Activated T-helper 2 cell treated with anti-CD3 and anti-CD28 coated beads, Interferon-gamma antibody, Interleukin-2, Interleukin-4, amounts not matched to agents 10 μg/mL and 5 μg/mL and 100 μg/mL, durations not matched to agents 14 hours and 24 hours and 36 hours (primary cell): ENCODE measurements at regions of chr9 and their contacts with region 1.

Region 1: DNA sequence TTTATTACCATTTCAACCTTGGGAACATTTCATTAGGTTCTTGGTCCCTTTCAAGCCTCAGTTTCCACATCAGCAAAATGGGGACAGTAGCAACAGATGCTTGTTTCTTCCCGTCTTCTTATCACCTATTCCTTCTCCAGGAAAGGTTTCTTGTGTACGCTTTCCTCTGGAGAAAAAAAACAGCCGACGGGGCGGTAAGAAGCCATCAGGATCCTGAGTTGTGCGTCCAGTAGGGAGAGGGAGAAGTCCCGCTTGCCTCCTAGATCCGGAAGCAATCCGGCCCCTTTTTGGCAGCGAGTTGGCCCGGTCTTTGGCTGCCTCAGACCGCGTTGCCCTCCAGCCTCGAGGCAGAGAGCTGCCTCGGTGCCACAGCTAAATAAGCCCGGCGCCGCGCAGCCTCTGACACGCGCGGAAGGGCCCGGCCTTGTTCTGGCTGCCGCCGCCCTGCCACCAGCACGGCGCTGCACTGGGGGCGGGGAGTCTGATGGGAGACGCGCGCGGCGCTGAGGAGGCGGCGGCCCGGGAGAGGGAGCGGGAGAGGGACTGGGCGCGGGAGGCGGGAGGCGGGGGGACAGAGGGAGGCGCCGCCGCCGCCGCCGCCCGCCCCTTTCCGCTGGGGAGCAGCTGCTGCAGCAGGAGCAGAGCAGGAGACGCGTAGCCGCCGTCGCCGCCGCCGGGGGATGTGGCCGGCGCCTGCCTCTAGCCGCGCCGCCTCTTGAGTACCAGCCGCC is at the start of gene SLC44A1:
- DNase-seq: peak; percentile 89
- H3K4me3 Mint-ChIP-seq: peak within 1 kb of the TSS; percentile 83
- H3K27ac Mint-ChIP-seq: peak within 1 kb of the TSS; percentile 15
- H3K4me1 Mint-ChIP-seq: peaks cover 9% of the 10 kb centered on the region
- H3K27me3 Mint-ChIP-seq: peaks cover 66% of the 10 kb centered on the region
- total RNA-seq, gene SLC44A1: 2.0 and 3.4 TPM in 2 replicates

Region 2: DNA sequence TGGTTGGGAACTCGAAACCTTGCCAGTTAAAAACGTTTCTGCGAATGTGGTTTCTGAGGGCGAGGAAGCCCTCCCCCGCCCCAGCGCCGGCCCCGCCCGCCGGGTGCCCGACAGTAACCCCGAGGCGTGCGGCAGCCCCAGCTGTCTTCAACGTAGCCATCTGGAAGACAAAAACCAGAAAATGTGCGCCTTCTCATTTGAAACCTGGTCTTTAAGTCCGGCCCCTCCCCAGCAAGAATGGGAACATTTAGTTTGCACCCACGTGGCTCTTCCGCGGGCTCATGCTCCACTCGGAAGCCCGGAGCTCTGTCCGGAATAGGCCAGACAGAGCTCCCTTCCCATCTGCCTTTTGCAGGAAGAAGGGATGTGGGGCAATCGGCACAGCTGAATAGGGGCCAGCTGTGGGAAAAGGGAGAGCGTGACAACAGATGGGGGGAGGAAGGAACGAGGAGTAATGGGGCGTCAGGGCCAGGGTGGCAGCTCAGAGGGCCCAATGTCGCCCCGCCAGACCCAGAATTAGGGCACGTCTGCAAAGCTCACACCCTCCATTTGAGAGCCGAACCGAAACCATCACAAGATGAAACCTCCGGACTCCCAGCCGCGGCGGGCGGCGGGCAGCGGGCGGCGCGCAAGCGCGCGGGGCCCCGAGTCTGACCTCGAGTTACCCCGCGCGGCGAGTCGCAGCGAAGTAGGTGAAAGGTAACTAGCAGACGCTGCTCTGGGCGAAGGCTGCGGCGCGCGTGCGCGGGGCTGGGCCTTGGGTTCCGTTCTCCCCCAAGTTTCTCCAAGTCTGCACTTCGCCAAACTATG is 252.8 kb before region 1 on chr9:
- intact Hi-C with region 1: loop called (anchors 10 kb)
- DNase-seq: peak; percentile 74
- H3K4me3 Mint-ChIP-seq: peak overlapping the region; percentile 75
- H3K27ac Mint-ChIP-seq: peak overlapping the region; percentile 52
- H3K4me1 Mint-ChIP-seq: peaks cover 19% of the 10 kb centered on the region
- H3K27me3 Mint-ChIP-seq: peaks cover 70% of the 10 kb centered on the region

Region 3: DNA sequence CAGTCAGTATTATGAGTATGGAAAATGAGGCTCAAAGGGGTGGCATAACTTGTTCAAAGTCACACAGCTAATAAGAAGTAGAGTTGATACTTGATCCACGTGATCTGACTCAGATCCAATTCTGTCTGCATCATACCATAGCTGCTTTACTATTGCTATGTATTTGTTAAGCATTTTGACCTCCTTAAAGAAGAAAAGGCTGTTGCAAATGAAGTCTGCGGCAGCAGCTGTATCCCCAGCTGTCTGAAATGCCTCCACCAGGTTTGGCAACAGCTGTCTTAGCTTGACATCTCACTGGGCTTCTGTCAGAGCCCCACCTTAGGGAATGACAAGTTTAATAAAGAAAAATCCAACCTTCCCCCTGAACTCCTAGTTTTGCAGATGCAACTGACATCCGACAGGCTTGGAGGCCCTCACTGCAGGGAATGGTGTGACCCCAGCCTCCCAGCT is 75.3 kb before region 1 on chr9:
- intact Hi-C with region 1: no loop called
- DNase-seq: no peak
- H3K4me3 Mint-ChIP-seq: no peak overlapping the region
- H3K27ac Mint-ChIP-seq: no peak overlapping the region
- H3K4me1 Mint-ChIP-seq: no peaks in the 10 kb centered on the region
- H3K27me3 Mint-ChIP-seq: peaks cover 8% of the 10 kb centered on the region

Region 4: GRCh38 chr9:105191508-105192121 is 52.6 kb before region 1 on chr9:
- intact Hi-C with region 1: no loop called
- DNase-seq: no peak
- H3K4me3 Mint-ChIP-seq: no peak overlapping the region
- H3K27ac Mint-ChIP-seq: no peak overlapping the region
- H3K4me1 Mint-ChIP-seq: no peaks in the 10 kb centered on the region
- H3K27me3 Mint-ChIP-seq: peaks cover 12% of the 10 kb centered on the region

Region 5: DNA sequence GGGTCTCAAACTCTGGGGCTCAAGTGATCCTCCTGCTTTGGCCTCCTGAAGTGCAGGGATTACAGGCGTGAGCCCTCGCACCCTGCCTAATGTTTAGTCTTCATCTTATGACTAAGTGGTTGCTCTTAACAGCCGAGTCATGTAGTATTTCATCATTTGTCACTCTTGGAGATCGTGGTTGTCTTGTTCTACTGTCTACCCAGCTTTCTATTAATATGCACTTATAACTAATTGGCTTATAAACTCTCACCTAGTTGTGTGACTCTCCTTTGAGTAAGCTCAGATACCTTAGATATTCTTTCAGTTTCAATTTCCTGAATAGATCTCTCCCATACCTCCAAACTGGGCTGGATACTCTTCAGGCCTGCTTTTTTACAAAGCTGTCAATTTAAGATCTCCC is 20.2 kb after region 1 on chr9:
- intact Hi-C with region 1: no loop called
- DNase-seq: no peak
- H3K4me3 Mint-ChIP-seq: no peak overlapping the region
- H3K27ac Mint-ChIP-seq: no peak overlapping the region
- H3K4me1 Mint-ChIP-seq: peaks cover 15% of the 10 kb centered on the region
- H3K27me3 Mint-ChIP-seq: peaks cover 5% of the 10 kb centered on the region

Region 6: GRCh38 chr9:105359892-105360291 is 115.7 kb after region 1 on chr9:
- intact Hi-C with region 1: loop called (anchors 1 kb)
- DNase-seq: peak; percentile 18
- H3K4me3 Mint-ChIP-seq: no peak overlapping the region
- H3K27ac Mint-ChIP-seq: no peak overlapping the region
- H3K4me1 Mint-ChIP-seq: peaks cover 25% of the 10 kb centered on the region
- H3K27me3 Mint-ChIP-seq: peaks cover 35% of the 10 kb centered on the region

Region 7: GRCh38 chr9:105557771-105558610 is 313.8 kb after region 1 on chr9 and contains the start of gene FKTN:
- intact Hi-C with region 1: loop called (anchors 10 kb)
- DNase-seq: peak; percentile 73
- H3K4me3 Mint-ChIP-seq: peak within 1 kb of the TSS; percentile 90
- H3K27ac Mint-ChIP-seq: peak within 1 kb of the TSS; percentile 51
- H3K4me1 Mint-ChIP-seq: peaks cover 13% of the 10 kb centered on the region
- H3K27me3 Mint-ChIP-seq: no peaks in the 10 kb centered on the region
- total RNA-seq, gene FKTN: 10.3 and 11.3 TPM in 2 replicates